GM10248 (cell line): ENCODE measurements at regions of chrX and their contacts with region 1.

Region 1: DNA sequence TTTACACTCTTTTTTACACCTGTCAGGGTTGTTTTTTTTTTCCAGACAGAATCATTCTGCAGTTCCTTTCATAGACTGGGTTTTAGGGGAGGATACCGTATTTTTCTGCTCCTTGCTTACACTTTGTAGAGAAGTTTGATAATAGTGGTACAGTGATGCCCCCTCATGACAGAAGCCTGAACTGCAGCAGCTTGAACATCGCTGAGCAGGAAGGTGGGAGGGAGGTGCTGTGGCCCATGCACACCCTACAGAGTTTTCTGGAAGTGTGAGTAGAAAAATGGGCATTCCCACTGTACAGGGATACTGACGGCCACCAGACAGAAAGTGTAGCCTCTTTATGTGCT is 54.5 kb downstream of the RAB40A start:
- DNase-seq: peak; percentile 30
- CTCF ChIP-seq: peak; percentile 80

Region 2: GRCh38 chrX:103211012-103211715 is 253.6 kb before region 1 on chrX:
- CTCF ChIA-PET with region 1: interaction called, 18 read pairs
- POLR2A ChIA-PET with region 1: no interaction called
- DNase-seq: peak; percentile 25
- CTCF ChIP-seq: peak; percentile 31

Region 3: GRCh38 chrX:103343105-103343504 is 121.6 kb before region 1 on chrX:
- CTCF ChIA-PET with region 1: interaction called, 14 read pairs
- POLR2A ChIA-PET with region 1: no interaction called
- DNase-seq: peak; percentile 20
- CTCF ChIP-seq: peak; percentile 41

Region 4: DNA sequence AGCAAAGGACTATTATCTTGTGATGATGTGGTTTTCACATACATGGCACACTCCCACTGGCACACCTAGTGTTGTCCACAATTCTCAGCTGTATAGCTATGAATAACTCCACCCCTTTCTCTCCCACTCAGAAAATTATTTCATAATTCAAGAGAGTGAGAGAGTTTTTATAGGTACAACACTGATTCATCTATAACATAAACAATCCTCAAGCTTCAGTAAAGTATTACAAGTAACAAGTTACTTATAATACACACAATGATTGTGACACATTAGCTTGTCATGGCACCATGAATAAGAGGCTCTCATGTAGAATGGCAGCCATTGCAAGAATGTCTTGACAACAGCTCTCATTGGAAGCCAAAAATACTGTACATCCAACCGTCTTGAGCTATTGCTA is 10.6 kb after region 1 on chrX:
- CTCF ChIA-PET with region 1: interaction called, 18 read pairs
- POLR2A ChIA-PET with region 1: no interaction called
- DNase-seq: no peak
- CTCF ChIP-seq: no peak